OCI-LY7 (cell line): ENCODE measurements at regions of chr19 and their contacts with region 1.

Region 1: DNA sequence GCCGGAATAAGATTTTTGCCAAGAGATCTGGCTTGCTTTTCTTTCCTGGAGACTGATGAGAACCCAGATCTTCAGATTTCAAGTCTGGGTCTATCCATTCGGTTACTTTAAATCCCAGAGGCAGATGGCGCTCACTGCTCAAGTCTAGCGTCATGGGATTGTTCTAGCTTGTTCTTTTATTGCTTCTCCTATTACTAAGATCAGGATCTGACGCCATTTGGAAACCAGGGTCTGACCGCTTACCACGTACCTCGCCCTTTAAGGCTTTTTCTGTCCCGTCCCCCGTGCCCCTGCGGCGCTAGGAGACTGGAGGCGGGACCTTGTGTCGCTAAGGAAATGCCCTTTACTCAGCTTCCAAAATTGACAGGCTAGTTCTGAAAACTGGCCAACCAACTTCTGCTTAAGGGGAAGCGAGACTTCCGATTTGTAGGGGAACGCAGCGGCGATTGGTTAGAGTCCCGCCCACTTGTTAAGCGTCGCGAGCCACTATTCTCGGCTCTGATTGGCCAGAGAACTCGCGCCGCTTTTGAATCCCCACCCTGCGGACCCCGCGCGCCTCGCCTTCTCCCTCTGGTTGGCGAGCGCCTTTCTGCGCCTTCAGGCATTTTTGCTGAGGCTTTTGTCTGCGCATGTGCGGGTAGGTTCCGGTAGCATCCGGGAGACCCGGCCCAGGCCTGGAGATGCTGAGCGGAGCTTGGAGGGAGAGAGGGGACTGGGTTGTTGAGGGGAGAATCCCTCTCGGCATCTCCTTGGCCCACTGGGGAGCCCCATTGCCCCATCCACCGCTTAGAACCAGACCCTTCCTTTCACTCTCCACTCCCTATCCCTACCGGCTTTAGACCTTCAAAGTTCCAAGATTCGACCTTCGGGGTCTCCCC is 3.8 kb upstream of the C19orf84 start:
- DNase-seq: peak; percentile 100
- H3K4me3 ChIP-seq: peak overlapping the region; percentile 85
- H3K27ac ChIP-seq: peak overlapping the region; percentile 93
- H3K4me1 ChIP-seq: peaks cover 30% of the 10 kb centered on the region
- CTCF ChIP-seq: peak; percentile 30; the same call in 1 of the 2 replicates

Region 2: GRCh38 chr19:51346742-51347141 is 47.5 kb before region 1 on chr19:
- CTCF ChIA-PET with region 1: no interaction called
- POLR2A ChIA-PET with region 1: no interaction called
- intact Hi-C with region 1: no loop called
- DNase-seq: no peak
- H3K4me3 ChIP-seq: no peak overlapping the region
- H3K27ac ChIP-seq: no peak overlapping the region
- H3K4me1 ChIP-seq: no peaks in the 10 kb centered on the region
- CTCF ChIP-seq: peak; percentile 44; the same call in 1 of the 2 replicates

Region 3: GRCh38 chr19:51367565-51368365 is 26.4 kb before region 1 on chr19:
- CTCF ChIA-PET with region 1: no interaction called
- POLR2A ChIA-PET with region 1: interaction called, 6 read pairs
- intact Hi-C with region 1: loop called (anchors 1 kb)
- DNase-seq: peak; percentile 98
- H3K4me3 ChIP-seq: peak overlapping the region; percentile 78
- H3K27ac ChIP-seq: peak overlapping the region; percentile 79
- H3K4me1 ChIP-seq: peaks cover 32% of the 10 kb centered on the region
- CTCF ChIP-seq: no peak